ENCODE measurements at regions of chr1 and their contacts with region 1.

Region 1: DNA sequence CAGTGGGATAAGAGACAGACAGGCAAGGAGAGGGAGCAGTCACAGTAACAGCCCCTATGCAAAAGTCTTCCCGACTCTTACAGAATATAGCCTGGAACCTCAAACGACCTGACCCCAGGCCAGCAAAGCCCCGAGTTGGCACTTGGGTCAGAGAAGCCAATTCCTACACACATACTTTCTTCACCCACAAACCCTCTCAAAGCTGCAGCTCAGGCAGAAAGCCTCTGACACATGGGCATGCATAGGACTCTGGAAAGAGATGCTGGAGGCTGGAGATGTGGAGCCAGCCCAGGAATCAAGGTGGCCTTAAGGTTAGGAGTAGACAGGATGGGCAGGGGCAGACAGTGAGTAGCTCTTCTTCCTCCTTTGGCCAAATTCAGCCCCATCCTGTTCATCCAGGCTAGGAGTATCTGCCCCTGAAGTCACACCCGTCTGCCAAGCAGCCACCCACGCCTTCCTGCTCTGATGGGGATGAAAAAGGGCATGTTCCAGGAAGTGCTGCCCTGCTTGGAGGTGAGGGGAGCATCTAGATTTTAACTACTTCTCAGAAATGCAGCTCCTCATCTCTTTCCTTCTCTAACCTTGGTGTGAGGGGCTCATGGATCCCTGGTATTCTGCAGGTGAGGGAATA is 7.8 kb downstream of the SLC41A1 start:
- DNase-seq: no peak
- H3K4me3 ChIP-seq: no peak overlapping the region
- H3K27ac ChIP-seq: no peak overlapping the region
- H3K4me1 ChIP-seq: no peaks in the 10 kb centered on the region
- H3K27me3 ChIP-seq: no peaks in the 10 kb centered on the region
- CTCF ChIP-seq: no peak
- POLR2A ChIP-seq: no peak

Region 2: DNA sequence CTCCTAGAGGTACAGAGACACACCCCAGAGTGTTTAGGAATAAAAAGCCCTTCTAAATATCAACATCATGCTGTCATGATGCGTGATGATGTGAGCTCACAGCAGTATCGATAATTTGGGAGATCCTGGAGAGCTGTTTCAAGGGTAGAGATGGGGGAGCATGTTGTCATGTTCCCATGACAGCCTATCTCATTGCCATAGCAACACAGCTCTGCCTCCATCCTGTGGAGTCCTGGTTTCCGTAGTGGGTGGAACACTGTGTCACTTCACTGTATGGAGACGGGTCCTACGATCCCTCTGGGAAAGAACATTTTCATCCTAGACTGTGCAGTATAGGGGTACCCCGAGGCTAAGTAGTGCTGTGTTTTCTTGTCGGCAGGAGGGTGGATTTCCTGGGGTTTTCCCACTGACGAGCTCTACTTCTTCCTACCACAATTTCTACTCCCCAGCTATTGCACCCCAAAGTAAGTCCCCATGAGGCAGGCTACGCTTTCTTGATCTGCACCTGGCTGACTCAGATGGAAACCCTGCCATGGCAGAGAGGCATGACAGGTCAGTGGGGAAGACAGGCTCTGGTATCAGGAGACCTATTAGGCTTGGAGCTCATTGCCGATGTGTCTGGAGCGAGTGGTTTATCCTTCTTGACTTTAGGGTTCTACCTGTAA is 1616.1 kb before region 1 on chr1:
- CTCF ChIA-PET with region 1: no interaction called
- POLR2A ChIA-PET with region 1: no interaction called
- dilution Hi-C with region 1: no loop called
- intact Hi-C with region 1: no loop called
- DNase-seq: no peak
- H3K4me3 ChIP-seq: no peak overlapping the region
- H3K27ac ChIP-seq: no peak overlapping the region
- H3K4me1 ChIP-seq: peaks cover 32% of the 10 kb centered on the region
- H3K27me3 ChIP-seq: no peaks in the 10 kb centered on the region
- CTCF ChIP-seq: no peak
- POLR2A ChIP-seq: no peak

Region 3: GRCh38 chr1:205668951-205669340 is 136.3 kb before region 1 on chr1:
- CTCF ChIA-PET with region 1: no interaction called
- POLR2A ChIA-PET with region 1: no interaction called
- dilution Hi-C with region 1: no loop called
- intact Hi-C with region 1: no loop called
- DNase-seq: no peak
- H3K4me3 ChIP-seq: no peak overlapping the region
- H3K27ac ChIP-seq: no peak overlapping the region
- H3K4me1 ChIP-seq: peaks cover 35% of the 10 kb centered on the region
- H3K27me3 ChIP-seq: no peaks in the 10 kb centered on the region
- CTCF ChIP-seq: no peak
- POLR2A ChIP-seq: no peak

Region 4: DNA sequence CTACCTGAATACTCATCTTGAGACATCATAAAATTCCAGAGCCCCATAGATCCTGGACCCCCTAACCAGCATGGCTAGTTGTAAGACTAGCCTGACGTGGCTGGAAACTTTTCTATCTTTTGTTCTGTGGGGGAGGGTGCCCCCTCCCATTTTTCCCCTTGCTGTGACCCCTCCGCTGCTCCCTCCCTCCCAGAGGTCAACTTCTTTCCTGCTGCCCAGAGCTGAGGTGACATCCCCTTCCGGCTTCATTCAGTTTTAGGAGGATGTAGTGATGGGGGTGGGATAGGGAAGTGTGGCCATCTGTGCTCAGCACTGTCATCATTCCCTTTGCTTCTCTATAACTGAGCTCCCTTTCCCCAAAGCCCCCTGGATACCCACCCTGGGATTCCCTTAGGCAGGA is 12.2 kb after region 1 on chr1:
- CTCF ChIA-PET with region 1: no interaction called
- POLR2A ChIA-PET with region 1: no interaction called
- dilution Hi-C with region 1: no loop called
- intact Hi-C with region 1: no loop called
- DNase-seq: no peak
- H3K4me3 ChIP-seq: no peak overlapping the region
- H3K27ac ChIP-seq: no peak overlapping the region
- H3K4me1 ChIP-seq: peaks cover 6% of the 10 kb centered on the region
- H3K27me3 ChIP-seq: peaks cover 0 to 8% of the 10 kb centered on the region in 2 experiments
- CTCF ChIP-seq: no peak
- POLR2A ChIP-seq: no peak

Region 5: GRCh38 chr1:205907794-205908193 is 102.6 kb after region 1 on chr1:
- CTCF ChIA-PET with region 1: interaction called, 16 read pairs
- POLR2A ChIA-PET with region 1: no interaction called
- dilution Hi-C with region 1: no loop called
- intact Hi-C with region 1: loop called (anchors 5 kb)
- DNase-seq: peak; percentile 46
- H3K4me3 ChIP-seq: no peak overlapping the region
- H3K27ac ChIP-seq: no peak overlapping the region
- H3K4me1 ChIP-seq: no peaks in the 10 kb centered on the region
- H3K27me3 ChIP-seq: peaks cover 5 to 9% of the 10 kb centered on the region in 2 experiments
- CTCF ChIP-seq: peak; percentile 65 to 75
- POLR2A ChIP-seq: no peak